Calu3 (cell line): ENCODE measurements at regions of chr19 and their contacts with region 1.

Region 1: DNA sequence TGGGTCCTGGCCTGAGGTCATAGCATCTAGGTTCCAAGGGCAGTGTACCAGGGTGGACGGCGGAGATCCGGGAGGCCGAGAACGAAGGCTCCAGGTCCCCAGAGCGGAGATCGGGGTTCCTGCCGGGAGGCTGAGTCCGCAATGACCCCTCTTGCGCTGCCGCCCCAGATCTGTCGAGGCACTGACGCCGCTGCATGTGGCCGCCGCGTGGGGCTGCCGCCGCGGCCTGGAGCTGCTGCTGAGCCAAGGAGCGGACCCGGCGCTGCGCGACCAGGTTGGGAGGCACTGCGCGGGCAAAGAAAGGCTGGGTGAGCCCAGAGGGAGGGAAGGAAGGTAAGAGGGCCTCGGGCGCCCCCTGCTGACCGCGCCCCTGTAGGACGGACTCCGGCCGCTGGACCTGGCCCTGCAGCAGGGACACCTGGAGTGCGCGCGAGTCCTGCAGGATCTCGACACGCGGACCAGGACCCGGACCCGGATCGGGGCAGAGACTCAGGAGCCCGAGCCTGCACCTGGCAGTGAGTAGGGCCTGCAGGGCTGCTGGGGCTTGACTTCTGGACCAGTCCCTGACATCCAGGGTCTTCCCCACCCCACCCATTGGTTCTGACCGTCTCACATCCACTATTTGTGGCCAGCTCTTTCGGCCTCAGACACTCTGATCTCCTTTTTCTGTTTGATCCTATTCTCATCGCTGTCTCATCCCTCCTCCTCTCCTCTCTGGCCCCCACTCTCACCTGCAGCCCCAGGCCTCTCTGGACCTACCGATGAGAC is 971 bp downstream of the ANKLE1 start:
- DNase-seq: peak; percentile 86
- H3K4me3 Mint-ChIP-seq: peak overlapping the region; percentile 44
- H3K27ac Mint-ChIP-seq: no peak overlapping the region
- H3K4me1 Mint-ChIP-seq: no peaks in the 10 kb centered on the region
- H3K27me3 Mint-ChIP-seq: no peaks in the 10 kb centered on the region
- CTCF ChIP-seq: peak; percentile 78

Region 2: GRCh38 chr19:17035842-17036424 is 246.7 kb before region 1 on chr19:
- CTCF ChIA-PET with region 1: no interaction called
- intact Hi-C with region 1: no loop called
- DNase-seq: no peak
- H3K4me3 Mint-ChIP-seq: no peak overlapping the region
- H3K27ac Mint-ChIP-seq: no peak overlapping the region
- H3K4me1 Mint-ChIP-seq: peaks cover 3% of the 10 kb centered on the region
- H3K27me3 Mint-ChIP-seq: peaks cover 57% of the 10 kb centered on the region
- CTCF ChIP-seq: no peak

Region 3: DNA sequence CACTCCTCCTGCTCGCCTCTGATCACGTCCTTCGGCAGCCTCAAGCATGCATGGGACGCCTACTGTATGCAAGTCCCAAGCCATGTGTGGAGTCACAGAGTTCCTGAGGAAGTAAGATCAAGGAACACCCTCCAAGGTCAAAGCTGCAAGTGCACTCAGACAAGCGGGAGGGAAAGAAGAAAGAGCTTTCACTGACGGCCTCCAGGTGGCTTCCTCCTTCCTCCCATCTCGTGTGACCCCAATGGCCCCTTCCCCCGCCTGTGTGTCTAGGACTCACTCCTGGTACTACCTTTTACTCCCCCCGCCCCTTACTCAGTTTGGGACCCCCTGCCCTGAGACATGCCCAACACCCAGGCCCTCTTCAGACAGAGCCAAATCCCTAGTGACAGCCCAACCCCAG is 213.5 kb before region 1 on chr19:
- CTCF ChIA-PET with region 1: no interaction called
- intact Hi-C with region 1: loop called (anchors 10 kb)
- DNase-seq: no peak
- H3K4me3 Mint-ChIP-seq: no peak overlapping the region
- H3K27ac Mint-ChIP-seq: no peak overlapping the region
- H3K4me1 Mint-ChIP-seq: no peaks in the 10 kb centered on the region
- H3K27me3 Mint-ChIP-seq: no peaks in the 10 kb centered on the region
- CTCF ChIP-seq: no peak

Region 4: DNA sequence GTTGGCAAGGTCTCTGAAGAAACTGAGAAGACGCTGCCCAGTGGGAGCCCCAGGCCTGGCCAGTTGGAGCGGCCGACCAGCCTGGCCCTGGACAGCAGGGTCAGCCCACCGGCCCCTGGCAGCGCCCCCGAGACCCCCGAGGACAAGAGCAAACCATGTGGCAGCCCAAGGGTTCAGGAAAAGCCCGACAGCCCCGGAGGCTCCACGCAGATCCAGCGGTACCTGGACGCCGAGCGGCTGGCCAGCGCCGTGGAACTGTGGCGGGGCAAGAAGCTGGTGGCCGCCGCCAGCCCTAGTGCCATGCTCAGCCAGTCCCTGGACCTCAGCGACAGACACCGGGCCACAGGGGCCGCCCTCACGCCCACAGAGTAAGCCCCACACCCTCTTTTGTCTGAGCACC is 87.6 kb before region 1 on chr19:
- CTCF ChIA-PET with region 1: no interaction called
- intact Hi-C with region 1: no loop called
- DNase-seq: no peak
- H3K4me3 Mint-ChIP-seq: no peak overlapping the region
- H3K27ac Mint-ChIP-seq: no peak overlapping the region
- H3K4me1 Mint-ChIP-seq: no peaks in the 10 kb centered on the region
- H3K27me3 Mint-ChIP-seq: no peaks in the 10 kb centered on the region
- CTCF ChIP-seq: no peak

Region 5: DNA sequence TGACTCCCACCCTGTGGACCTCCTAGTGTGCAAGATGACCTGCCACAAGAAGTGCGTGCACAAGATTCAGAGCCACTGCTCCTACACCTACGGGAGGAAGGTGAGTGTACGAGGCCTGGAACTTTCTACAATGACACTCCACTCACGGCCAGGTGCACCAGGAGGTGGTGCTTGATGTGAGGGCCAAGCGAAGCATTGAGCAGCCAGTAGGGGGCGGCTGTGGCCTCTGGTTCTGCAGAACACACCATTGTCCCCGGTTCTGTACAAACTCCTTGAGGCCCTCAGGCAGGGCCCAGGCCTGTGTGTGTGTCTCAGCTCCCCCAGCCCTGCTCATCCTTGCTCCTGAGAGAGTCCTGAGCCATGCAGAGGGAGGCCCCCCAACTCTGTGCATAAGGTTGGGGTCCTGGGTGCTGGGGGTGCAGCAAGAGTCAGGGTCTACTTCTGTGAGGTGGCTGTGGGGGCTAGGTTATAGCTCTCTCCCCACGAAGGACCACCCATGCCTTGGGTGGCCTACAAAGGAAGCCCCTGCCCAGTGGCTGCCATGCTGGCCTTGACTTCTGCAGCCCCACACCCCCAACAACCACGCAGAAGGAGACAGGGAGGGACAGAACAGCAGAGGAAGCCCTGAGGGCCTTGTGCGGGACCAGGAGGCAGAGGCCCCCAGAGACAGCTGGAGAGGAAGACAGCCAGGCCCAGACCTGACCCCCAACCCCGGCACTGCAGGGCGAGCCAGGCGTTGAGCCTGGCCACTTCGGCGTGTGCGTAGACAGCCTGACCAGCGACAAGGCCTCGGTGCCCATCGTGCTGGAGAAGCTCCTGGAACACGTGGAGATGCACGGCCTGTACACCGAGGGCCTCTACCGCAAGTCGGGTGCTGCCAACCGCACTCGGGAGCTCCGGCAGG is 77.2 kb before region 1 on chr19:
- CTCF ChIA-PET with region 1: interaction called, 3 read pairs
- intact Hi-C with region 1: loop called (anchors 5 kb)
- DNase-seq: peak; percentile 64
- H3K4me3 Mint-ChIP-seq: no peak overlapping the region
- H3K27ac Mint-ChIP-seq: no peak overlapping the region
- H3K4me1 Mint-ChIP-seq: no peaks in the 10 kb centered on the region
- H3K27me3 Mint-ChIP-seq: no peaks in the 10 kb centered on the region
- CTCF ChIP-seq: peak; percentile 55